ENCODE measurements at regions of chr19 and their contacts with region 1.

Region 1: GRCh38 chr19:33406521-33407139 is 33.1 kb downstream of the CEBPG start:
- DNase-seq: peak; percentile 47 to 78 (median 64)
- H3K4me3 ChIP-seq: no peak overlapping the region
- H3K4me3 Mint-ChIP-seq: peak overlapping the region in 1 of 7 donors; percentile 48
- H3K27ac ChIP-seq: no peak overlapping the region
- H3K27ac Mint-ChIP-seq: peak overlapping the region in 1 of 8 donors; percentile 54
- H3K4me1 ChIP-seq: no peaks in the 10 kb centered on the region
- H3K4me1 Mint-ChIP-seq: no peaks in the 10 kb centered on the region
- H3K27me3 ChIP-seq: no peaks in the 10 kb centered on the region
- H3K27me3 Mint-ChIP-seq: no peaks in the 10 kb centered on the region

Region 2: GRCh38 chr19:33235269-33235995 is 171.2 kb before region 1 on chr19:
- CTCF ChIA-PET with region 1: interaction called, 70 read pairs
- POLR2A ChIA-PET with region 1: no interaction called
- DNase-seq: peak; percentile 52 to 83 (median 69)
- H3K4me3 ChIP-seq: no peak overlapping the region
- H3K4me3 Mint-ChIP-seq: peak overlapping the region; percentile 9 to 82 (median 76)
- H3K27ac ChIP-seq: no peak overlapping the region
- H3K27ac Mint-ChIP-seq: peak overlapping the region in 4 of 8 donors; percentile 24 to 70 (median 64)
- H3K4me1 ChIP-seq: peaks cover 11% of the 10 kb centered on the region
- H3K4me1 Mint-ChIP-seq: peaks cover 18 to 23% (median 19%) of the 10 kb centered on the region in 3 donors
- H3K27me3 ChIP-seq: peaks cover 4% of the 10 kb centered on the region
- H3K27me3 Mint-ChIP-seq: peaks cover 11 to 13% of the 10 kb centered on the region in 2 donors

Region 3: GRCh38 chr19:33241530-33242101 is 165.0 kb before region 1 on chr19:
- CTCF ChIA-PET with region 1: interaction called, 70 read pairs
- POLR2A ChIA-PET with region 1: no interaction called
- DNase-seq: peak in 3 of 5 donors; percentile 20 to 35 (median 21)
- H3K4me3 ChIP-seq: no peak overlapping the region
- H3K4me3 Mint-ChIP-seq: peak overlapping the region in 2 of 7 donors; percentile 12 to 18
- H3K27ac ChIP-seq: no peak overlapping the region
- H3K27ac Mint-ChIP-seq: peak overlapping the region in 7 of 8 donors; percentile 39 to 84 (median 74)
- H3K4me1 ChIP-seq: peaks cover 20% of the 10 kb centered on the region
- H3K4me1 Mint-ChIP-seq: peaks cover 10 to 20% (median 13%) of the 10 kb centered on the region in 3 donors
- H3K27me3 ChIP-seq: no peaks in the 10 kb centered on the region
- H3K27me3 Mint-ChIP-seq: peaks cover 5 to 6% of the 10 kb centered on the region in 2 donors

Measured in CD8-positive, alpha-beta memory T cell (primary cell).